ENCODE measurements at regions of chr6 and their contacts with region 1.

Region 1: GRCh38 chr6:108993876-108994275 is 100.8 kb downstream of the SESN1 start:
- DNase-seq: no peak
- ATAC-seq: no peak
- H3K4me3 ChIP-seq: no peak overlapping the region
- H3K4me3 Mint-ChIP-seq: no peak overlapping the region
- H3K27ac ChIP-seq: no peak overlapping the region
- H3K27ac Mint-ChIP-seq: no peak overlapping the region
- H3K4me1 ChIP-seq: no peaks in the 10 kb centered on the region
- H3K4me1 Mint-ChIP-seq: no peaks in the 10 kb centered on the region
- H3K27me3 ChIP-seq: no peaks in the 10 kb centered on the region
- H3K27me3 Mint-ChIP-seq: no peaks in the 10 kb centered on the region

Region 2: GRCh38 chr6:108835218-108835850 is 158.5 kb before region 1 on chr6:
- CTCF ChIA-PET with region 1: no interaction called
- POLR2A ChIA-PET with region 1: no interaction called
- DNase-seq: peak; percentile 57 to 91 (median 81)
- ATAC-seq: peak; percentile 95 to 99 (median 98)
- H3K4me3 ChIP-seq: no peak overlapping the region
- H3K4me3 Mint-ChIP-seq: no peak overlapping the region
- H3K27ac ChIP-seq: no peak overlapping the region
- H3K27ac Mint-ChIP-seq: peak overlapping the region; percentile 48 to 63
- H3K4me1 ChIP-seq: peaks cover 7 to 27% of the 10 kb centered on the region in 2 experiments
- H3K4me1 Mint-ChIP-seq: peaks cover 18 to 36% (median 20%) of the 10 kb centered on the region in 3 donors
- H3K27me3 ChIP-seq: no peaks in the 10 kb centered on the region
- H3K27me3 Mint-ChIP-seq: no peaks in the 10 kb centered on the region

Region 3: DNA sequence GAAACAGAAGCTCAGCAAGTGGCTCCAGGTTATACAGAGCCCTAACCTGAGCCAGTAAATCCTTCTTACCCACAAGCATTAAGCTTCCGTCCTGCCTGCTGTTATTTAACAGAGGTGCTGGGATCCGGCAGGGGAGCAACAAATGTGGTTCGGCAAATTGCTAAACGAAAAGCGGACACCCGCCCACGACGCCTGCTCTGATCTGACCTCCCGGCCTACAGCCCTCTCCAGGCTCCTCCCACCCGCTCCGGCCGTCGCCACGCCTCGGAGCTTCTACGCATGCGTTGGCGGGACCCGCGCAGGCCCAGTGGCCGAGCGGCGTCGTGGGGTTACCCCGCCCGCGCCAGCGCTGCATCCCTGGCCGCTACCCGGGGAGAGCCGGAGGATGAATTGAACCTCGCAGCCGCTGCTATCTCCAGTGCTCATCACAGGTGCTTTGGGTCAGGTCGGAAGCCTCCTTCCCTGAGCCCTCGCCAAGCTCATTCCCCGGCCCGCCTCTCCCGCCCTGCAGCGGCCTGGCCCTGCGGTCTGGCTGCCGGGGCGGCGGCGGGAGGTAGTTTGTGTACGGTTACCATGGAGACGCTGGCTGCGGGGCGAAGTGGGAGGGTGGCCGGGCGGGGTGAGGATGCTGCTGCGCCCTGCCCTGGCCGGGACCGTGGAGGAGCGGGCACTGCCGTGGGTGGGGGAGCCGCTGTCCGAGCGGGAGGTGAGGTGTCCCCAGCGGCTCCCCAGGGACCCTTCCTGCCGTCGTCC is 145.6 kb before region 1 on chr6 and contains the start of gene ARMC2:
- CTCF ChIA-PET with region 1: no interaction called
- POLR2A ChIA-PET with region 1: interaction called in 1 of 2 experiments, 13 read pairs
- DNase-seq: peak; percentile 62 to 90 (median 75)
- ATAC-seq: peak; percentile 88 to 92 (median 90)
- H3K4me3 ChIP-seq: peak within 1 kb of the TSS; percentile 73
- H3K4me3 Mint-ChIP-seq: peak within 1 kb of the TSS; percentile 82 to 87 (median 86)
- H3K27ac ChIP-seq: peak within 1 kb of the TSS; percentile 59
- H3K27ac Mint-ChIP-seq: peak within 1 kb of the TSS; percentile 68 to 89
- H3K4me1 ChIP-seq: peaks cover 2 to 12% of the 10 kb centered on the region in 2 experiments
- H3K4me1 Mint-ChIP-seq: peaks cover 24 to 26% (median 25%) of the 10 kb centered on the region in 3 donors
- H3K27me3 ChIP-seq: peaks cover 0 to 9% of the 10 kb centered on the region in 2 experiments
- H3K27me3 Mint-ChIP-seq: no peaks in the 10 kb centered on the region
- total RNA-seq, gene ARMC2: 6.4 to 10.0 (median 8.1) TPM

Region 4: GRCh38 chr6:109050012-109050411 is 56.1 kb after region 1 on chr6:
- CTCF ChIA-PET with region 1: no interaction called
- POLR2A ChIA-PET with region 1: no interaction called
- DNase-seq: no peak
- ATAC-seq: no peak
- H3K4me3 ChIP-seq: no peak overlapping the region
- H3K4me3 Mint-ChIP-seq: no peak overlapping the region
- H3K27ac ChIP-seq: no peak overlapping the region
- H3K27ac Mint-ChIP-seq: no peak overlapping the region
- H3K4me1 ChIP-seq: peaks cover 0 to 2% of the 10 kb centered on the region in 2 experiments
- H3K4me1 Mint-ChIP-seq: peaks cover 36 to 46% (median 39%) of the 10 kb centered on the region in 3 donors
- H3K27me3 ChIP-seq: no peaks in the 10 kb centered on the region
- H3K27me3 Mint-ChIP-seq: no peaks in the 10 kb centered on the region